Activated CD4-positive, alpha-beta T cell treated with anti-CD3 and anti-CD28 coated beads, Interleukin-2, amount 10 ng/mL, durations not matched to agents 7 days and 5 days (primary cell): ENCODE measurements at regions of chr21 and their contacts with region 1.

Region 1: GRCh38 chr21:29002442-29003144 is 9.9 kb upstream of the LTN1 start:
- DNase-seq: peak; percentile 95
- H3K4me3 Mint-ChIP-seq: peak overlapping the region; percentile 87
- H3K27ac Mint-ChIP-seq: peak overlapping the region; percentile 98
- H3K4me1 Mint-ChIP-seq: peaks cover 22% of the 10 kb centered on the region
- H3K27me3 Mint-ChIP-seq: no peaks in the 10 kb centered on the region

Region 2: GRCh38 chr21:28916150-28916893 is 86.3 kb before region 1 on chr21:
- CTCF ChIA-PET with region 1: no interaction called
- POLR2A ChIA-PET with region 1: no interaction called
- DNase-seq: no peak
- H3K4me3 Mint-ChIP-seq: no peak overlapping the region
- H3K27ac Mint-ChIP-seq: no peak overlapping the region
- H3K4me1 Mint-ChIP-seq: no peaks in the 10 kb centered on the region
- H3K27me3 Mint-ChIP-seq: peaks cover 7% of the 10 kb centered on the region

Region 3: GRCh38 chr21:28982637-28983036 is 20.0 kb before region 1 on chr21:
- CTCF ChIA-PET with region 1: no interaction called
- POLR2A ChIA-PET with region 1: no interaction called
- DNase-seq: no peak
- H3K4me3 Mint-ChIP-seq: no peak overlapping the region
- H3K27ac Mint-ChIP-seq: no peak overlapping the region
- H3K4me1 Mint-ChIP-seq: peaks cover 9% of the 10 kb centered on the region
- H3K27me3 Mint-ChIP-seq: no peaks in the 10 kb centered on the region

Region 4: DNA sequence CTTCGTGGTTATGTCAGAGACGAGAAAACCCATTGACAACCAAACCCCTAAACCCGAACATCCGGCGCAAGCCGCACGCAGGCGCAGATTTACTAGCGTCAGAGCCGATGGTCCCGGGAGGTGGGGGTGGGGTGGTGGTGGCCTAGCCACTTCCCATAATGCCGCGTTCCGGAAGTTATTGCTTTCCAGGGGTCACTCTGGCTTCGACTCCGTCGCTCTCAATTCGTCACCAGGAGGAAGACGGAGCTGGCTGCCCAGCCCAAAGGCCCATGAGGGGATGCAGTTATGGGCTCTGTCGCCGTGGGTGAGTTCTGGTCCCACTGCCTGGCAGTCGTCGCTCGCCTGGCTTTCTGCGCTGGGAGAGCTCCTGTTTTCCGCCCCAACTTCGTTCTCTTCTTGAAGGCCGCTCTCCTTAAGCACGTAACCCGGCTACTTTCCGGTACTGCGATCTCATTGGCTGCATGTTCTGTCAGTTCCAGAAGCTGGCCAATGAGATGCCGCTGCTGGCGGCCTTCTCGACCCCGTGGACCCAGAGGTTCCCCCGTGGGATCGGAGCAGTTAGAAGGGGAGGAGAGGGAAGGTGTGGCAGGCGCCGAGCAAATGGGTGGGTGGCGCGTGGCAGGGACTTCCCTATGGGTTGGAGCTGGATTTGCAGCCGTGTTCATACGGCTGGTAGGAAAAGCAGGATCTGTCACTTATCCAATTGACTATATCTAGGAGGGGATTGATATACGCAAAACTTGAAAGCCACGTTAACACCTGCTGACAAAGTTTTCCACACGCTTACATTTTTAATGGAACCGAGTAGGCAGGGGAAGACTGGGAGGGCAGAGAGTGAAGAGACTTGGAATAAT is 22.1 kb after region 1 on chr21 and contains the start of gene USP16:
- CTCF ChIA-PET with region 1: interaction called, 4 read pairs
- POLR2A ChIA-PET with region 1: interaction called, 15 read pairs
- DNase-seq: peak; percentile 95
- H3K4me3 Mint-ChIP-seq: peak within 1 kb of the TSS; percentile 96
- H3K27ac Mint-ChIP-seq: peak within 1 kb of the TSS; percentile 98
- H3K4me1 Mint-ChIP-seq: peaks cover 56% of the 10 kb centered on the region
- H3K27me3 Mint-ChIP-seq: no peaks in the 10 kb centered on the region
- total RNA-seq, gene USP16: 36.0 to 39.9 TPM

Region 5: DNA sequence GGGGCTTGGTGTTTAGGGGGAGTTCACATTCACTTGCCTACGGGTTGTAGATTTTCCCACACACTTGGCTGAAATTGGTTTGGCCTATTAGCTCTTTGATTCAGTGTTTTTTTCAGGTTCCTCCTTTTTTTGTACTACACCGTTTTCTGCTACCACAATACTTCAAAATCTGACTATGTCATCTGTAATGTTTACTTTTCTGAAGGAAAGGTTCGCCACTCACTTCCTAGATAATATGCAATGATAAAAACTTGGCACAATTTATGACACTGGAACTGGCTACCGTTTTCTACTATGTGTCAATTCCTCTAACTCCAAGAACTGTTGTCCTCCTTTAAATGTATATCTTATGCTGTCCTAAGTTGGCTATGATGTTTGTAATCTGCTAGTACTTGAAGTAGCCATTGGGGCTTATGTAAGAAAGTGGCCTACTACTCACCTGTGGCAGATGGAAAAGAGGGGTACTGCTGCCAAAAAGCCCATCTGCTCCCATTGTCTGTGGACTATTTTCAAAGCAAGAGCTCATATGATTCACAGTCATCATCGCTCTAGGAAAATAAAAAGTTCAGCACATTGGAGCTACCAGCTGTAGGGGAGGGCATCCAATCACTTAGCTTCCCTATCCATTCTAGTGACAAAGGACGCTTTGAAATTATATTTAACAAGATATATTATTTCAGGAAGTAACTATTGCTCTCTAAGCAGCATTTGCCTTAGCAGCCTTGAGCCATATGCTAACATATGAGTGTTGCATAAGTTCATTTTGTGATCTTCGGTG is 253.7 kb after region 1 on chr21:
- CTCF ChIA-PET with region 1: no interaction called
- POLR2A ChIA-PET with region 1: no interaction called
- DNase-seq: no peak
- H3K4me3 Mint-ChIP-seq: no peak overlapping the region
- H3K27ac Mint-ChIP-seq: no peak overlapping the region
- H3K4me1 Mint-ChIP-seq: no peaks in the 10 kb centered on the region
- H3K27me3 Mint-ChIP-seq: peaks cover 1% of the 10 kb centered on the region